H1 (cell line): ENCODE measurements at regions of chr19 and their contacts with region 1.

Region 1: DNA sequence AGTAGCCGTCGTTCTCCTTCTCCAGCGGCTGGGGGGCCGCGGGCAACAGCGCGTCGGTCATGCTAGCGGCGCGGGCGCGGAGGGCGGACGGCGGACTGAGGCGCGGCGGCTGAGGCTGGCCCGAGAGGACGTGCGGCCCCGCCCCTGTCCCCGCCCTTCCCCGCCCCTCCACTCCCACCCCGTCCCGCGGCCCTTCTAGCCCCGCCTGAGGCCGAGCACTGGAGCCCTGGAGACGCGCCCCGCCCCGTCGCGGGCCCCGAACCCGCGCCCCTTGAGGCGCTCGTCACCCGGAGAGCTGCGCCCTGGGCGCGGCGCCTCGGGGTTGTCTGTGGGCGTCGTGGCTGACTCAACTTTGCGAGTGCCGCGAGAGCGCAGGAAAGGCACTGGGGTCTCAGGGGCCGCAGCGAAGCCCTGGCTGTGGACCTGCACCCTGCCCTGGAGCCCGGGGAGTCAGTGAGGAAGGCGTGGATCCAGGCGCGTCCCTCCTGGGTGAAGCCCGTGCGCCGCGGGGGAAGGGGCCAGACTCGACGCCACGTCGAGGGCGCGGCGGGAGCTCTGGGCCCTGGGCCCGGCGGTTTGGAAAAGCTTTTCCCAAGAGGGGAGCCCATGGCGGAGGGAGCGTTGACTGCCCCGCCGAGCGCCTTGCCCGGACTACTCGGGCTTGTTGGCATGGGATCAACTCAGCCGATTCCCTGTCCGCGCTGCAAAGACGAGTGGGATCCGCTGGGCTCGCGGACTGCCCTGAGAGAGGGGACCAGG is at the start of gene RHPN2:
- DNase-seq: peak in 1 of 2 experiments; percentile 82
- H3K4me3 ChIP-seq: peak within 1 kb of the TSS; percentile 54 to 100 (median 75)
- H3K27ac ChIP-seq: no peak within 1 kb of the TSS
- H3K4me1 ChIP-seq: peaks cover 0 to 4% (median 0%) of the 10 kb centered on the region in 4 experiments; a peak in 1 of 7 replicates
- H3K27me3 ChIP-seq: peaks cover 0 to 4% (median 3%) of the 10 kb centered on the region in 4 experiments; a peak in 4 of 7 replicates
- CTCF ChIP-seq: no peak
- EP300 ChIP-seq: no peak
- POLR2A ChIP-seq: peak in 1 of 2 experiments; percentile 29; a peak in 1 of 3 replicates
- RAD21 ChIP-seq: no peak
- total RNA-seq, gene RHPN2: 31.1 and 36.2 TPM in 2 replicates

Region 2: GRCh38 chr19:33030773-33031172 is 34.2 kb before region 1 on chr19:
- CTCF ChIA-PET with region 1: no interaction called
- POLR2A ChIA-PET with region 1: no interaction called
- DNase-seq: no peak
- H3K4me3 ChIP-seq: no peak overlapping the region
- H3K27ac ChIP-seq: no peak overlapping the region
- H3K4me1 ChIP-seq: peaks cover 0 to 9% (median 4%) of the 10 kb centered on the region in 4 experiments; a peak in 3 of 7 replicates
- H3K27me3 ChIP-seq: no peaks in the 10 kb centered on the region
- CTCF ChIP-seq: no peak
- EP300 ChIP-seq: no peak
- POLR2A ChIP-seq: no peak
- RAD21 ChIP-seq: no peak

Region 3: DNA sequence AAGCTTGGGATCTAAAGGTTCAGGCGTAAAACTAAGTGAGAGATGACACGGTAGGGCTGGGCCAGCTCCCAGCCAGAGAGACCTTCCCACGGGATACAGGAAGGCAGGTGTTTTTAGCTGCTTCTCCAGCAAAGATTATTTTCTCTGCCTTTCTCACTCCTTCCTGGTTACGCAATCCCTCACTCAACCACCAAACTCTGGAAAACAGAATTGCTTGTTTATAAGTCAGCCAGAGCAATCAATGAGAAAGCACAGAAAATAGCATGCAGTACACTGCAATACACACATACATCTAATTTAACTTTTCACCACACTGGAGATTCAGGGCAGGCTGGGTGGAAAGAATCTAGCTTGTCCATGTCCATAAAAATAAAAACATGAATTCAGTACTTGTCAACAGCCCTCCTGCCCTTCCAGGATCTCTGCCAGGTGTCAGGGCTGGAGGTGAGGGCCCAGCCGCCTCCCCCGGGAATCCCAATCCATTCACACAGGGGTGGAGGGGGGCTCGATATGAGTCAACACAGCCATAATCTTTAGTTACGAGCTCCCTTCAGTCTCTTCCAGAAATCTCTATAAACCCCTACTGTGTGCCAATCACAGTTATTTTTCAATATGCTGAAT is 12.5 kb before region 1 on chr19:
- CTCF ChIA-PET with region 1: interaction called, 3 read pairs
- POLR2A ChIA-PET with region 1: interaction called, 10 read pairs
- DNase-seq: no peak
- H3K4me3 ChIP-seq: no peak overlapping the region
- H3K27ac ChIP-seq: no peak overlapping the region
- H3K4me1 ChIP-seq: peaks cover 0 to 5% (median 1%) of the 10 kb centered on the region in 4 experiments; a peak in 4 of 7 replicates
- H3K27me3 ChIP-seq: no peaks in the 10 kb centered on the region
- CTCF ChIP-seq: no peak
- EP300 ChIP-seq: no peak
- POLR2A ChIP-seq: no peak
- RAD21 ChIP-seq: no peak

Region 4: GRCh38 chr19:33080761-33081681 is 16.1 kb after region 1 on chr19 and contains the start of gene GPATCH1:
- CTCF ChIA-PET with region 1: no interaction called
- POLR2A ChIA-PET with region 1: interaction called, 12 read pairs
- DNase-seq: peak; percentile 60 to 96
- H3K4me3 ChIP-seq: peak within 1 kb of the TSS; percentile 95 to 99 (median 96)
- H3K27ac ChIP-seq: no peak within 1 kb of the TSS
- H3K4me1 ChIP-seq: peaks cover 2 to 9% (median 4%) of the 10 kb centered on the region in 4 experiments; a peak in 4 of 7 replicates
- H3K27me3 ChIP-seq: no peaks in the 10 kb centered on the region
- CTCF ChIP-seq: no peak
- EP300 ChIP-seq: no peak; a peak in 1 of 3 replicates
- POLR2A ChIP-seq: peak in 1 of 2 experiments; percentile 53; a peak in 1 of 3 replicates
- RAD21 ChIP-seq: peak in 1 of 2 experiments; percentile 9; a peak in 1 of 4 replicates
- total RNA-seq, gene GPATCH1: 8.2 and 8.8 TPM in 2 replicates